Activated T-helper 2 cell treated with anti-CD3 and anti-CD28 coated beads, Interferon-gamma antibody, Interleukin-2, Interleukin-4, amounts not matched to agents 10 μg/mL and 5 μg/mL and 100 μg/mL, durations not matched to agents 14 hours and 24 hours and 36 hours (primary cell): ENCODE measurements at regions of chr2 and their contacts with region 1.

Region 1: GRCh38 chr2:182650704-182651103 is 65.4 kb upstream of the DNAJC10 start:
- DNase-seq: no peak
- H3K4me3 Mint-ChIP-seq: no peak overlapping the region
- H3K27ac Mint-ChIP-seq: no peak overlapping the region
- H3K4me1 Mint-ChIP-seq: peaks cover 15% of the 10 kb centered on the region
- H3K27me3 Mint-ChIP-seq: peaks cover 2% of the 10 kb centered on the region

Region 2: DNA sequence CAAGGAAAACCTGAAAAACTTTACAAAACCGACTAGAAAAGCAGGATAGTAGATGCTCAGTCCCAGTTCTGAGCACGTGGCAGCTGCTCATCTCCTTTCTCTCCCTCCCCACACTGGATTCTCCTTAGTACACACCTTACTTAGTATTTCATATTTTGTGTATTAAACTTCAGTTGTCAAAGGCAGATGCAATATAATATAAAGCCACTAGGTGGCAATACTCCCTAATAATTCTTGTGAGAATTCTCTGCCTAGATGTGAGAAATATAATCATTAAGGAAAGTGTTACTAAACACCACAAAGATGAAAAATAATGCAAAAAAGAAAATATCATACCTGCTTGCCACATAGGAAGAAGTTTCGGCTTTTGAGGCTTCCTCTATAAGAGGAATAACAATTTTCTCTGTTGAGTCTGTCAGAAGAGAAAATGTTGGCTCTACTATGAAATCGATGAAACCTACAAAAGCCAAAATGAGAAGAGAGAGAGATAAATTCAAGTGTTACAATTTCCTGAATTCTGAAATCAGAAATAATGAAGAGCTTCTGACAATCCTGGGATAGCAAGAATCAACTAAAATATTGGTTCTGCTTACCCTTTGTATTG is 464.5 kb before region 1 on chr2:
- intact Hi-C with region 1: loop called (anchors 2 kb)
- DNase-seq: no peak
- H3K4me3 Mint-ChIP-seq: no peak overlapping the region
- H3K27ac Mint-ChIP-seq: no peak overlapping the region
- H3K4me1 Mint-ChIP-seq: no peaks in the 10 kb centered on the region
- H3K27me3 Mint-ChIP-seq: no peaks in the 10 kb centered on the region

Region 3: GRCh38 chr2:182240862-182241371 is 409.8 kb before region 1 on chr2:
- intact Hi-C with region 1: loop called (anchors 2 kb)
- DNase-seq: no peak
- H3K4me3 Mint-ChIP-seq: no peak overlapping the region
- H3K27ac Mint-ChIP-seq: no peak overlapping the region
- H3K4me1 Mint-ChIP-seq: no peaks in the 10 kb centered on the region
- H3K27me3 Mint-ChIP-seq: peaks cover 3% of the 10 kb centered on the region

Region 4: DNA sequence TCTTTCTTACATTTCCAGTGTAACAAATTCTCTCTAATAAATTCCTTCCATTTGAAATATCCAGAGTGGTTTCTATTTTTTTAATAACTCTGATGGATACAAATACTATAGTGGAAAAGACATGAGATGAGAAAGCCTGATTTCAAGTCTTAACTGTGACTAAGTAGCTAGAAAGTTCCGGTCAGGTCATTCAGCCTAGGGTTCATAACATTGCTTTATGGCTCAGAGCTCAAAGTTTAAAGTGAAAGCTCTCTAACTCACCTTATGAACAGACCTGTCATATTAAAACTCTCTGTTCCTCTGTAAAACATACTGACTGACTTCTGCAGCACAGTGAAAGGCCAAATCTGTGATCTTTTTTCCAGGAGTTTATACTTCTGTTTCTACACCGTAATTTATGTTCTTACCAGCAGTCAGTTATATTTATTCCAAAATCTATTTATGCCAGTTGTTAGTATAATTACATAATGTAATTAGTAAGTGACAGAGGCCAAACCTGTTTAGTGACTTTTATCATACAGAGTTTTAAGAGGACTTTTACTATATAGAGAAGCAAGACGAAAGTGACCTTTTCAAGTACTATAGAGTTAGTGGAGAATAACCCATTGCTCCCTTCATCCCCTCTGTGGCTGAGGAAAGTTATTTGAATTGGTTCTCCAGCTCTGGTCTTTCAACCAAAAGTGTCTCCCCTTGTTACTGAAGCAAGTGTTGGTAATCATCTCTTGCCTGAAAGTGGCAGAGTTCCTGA is 105.1 kb before region 1 on chr2:
- intact Hi-C with region 1: no loop called
- DNase-seq: no peak
- H3K4me3 Mint-ChIP-seq: no peak overlapping the region
- H3K27ac Mint-ChIP-seq: no peak overlapping the region
- H3K4me1 Mint-ChIP-seq: no peaks in the 10 kb centered on the region
- H3K27me3 Mint-ChIP-seq: no peaks in the 10 kb centered on the region